K562 (cell line): ENCODE measurements at regions of chr15 and their contacts with region 1.

Region 1: DNA sequence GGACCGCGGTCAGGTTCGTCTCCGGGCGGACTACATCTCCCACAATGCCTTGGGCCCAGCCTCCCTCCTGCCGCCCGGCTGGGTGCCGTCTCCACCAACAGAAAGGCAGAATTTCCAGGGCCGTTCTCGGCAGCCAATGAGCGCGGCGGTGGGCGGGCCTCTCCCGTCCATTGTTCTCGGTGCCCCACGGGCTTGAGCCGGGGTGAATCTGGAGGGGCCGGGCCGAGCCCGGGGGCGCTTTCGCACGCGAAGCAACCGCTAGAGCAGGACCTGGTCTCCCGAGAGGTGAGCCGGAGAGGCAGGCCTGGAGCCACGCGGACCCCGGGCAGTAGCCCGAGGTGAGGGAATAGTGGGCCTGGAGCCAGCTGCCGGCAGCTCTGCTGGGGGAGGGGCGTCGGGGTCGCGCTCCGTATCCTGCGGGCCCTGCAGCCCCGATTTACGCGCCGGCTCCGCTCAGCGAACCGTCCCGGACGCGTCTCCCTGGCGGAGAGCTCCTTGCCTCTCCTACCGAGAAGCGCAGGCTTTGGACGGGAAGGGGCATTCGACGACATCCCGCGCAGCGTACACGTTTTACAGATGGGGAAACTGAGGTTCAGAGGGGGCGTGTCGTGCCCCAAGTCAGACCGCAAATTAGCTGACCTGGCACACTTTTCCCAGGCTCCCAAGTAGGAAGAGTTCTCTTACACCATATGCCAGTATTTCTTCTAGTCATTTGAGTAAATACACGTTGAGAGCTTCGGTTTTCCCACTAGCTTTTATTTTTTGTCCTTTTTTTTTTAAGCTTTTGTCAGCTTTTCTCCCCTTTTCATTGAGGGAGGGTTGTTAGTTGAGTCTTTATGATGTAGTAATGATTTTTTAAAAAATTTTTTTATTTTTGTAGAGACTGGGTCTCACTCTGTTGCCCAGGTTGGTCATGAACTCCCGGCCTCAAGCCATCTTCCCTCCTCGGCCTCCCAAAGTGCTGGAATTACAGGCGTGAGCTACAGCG is at the start of gene ZSCAN2:
- DNase-seq: peak; percentile 96
- ATAC-seq: peak; percentile 99
- H3K4me3 ChIP-seq: peak within 1 kb of the TSS; percentile 60
- H3K27ac ChIP-seq: peak within 1 kb of the TSS; percentile 14; the same call in 2 of the 3 replicates
- H3K4me1 ChIP-seq: peaks cover 10 to 21% of the 10 kb centered on the region in 2 experiments
- H3K27me3 ChIP-seq: no peaks in the 10 kb centered on the region
- CTCF ChIP-seq: no peak; a peak in 1 of 6 replicates
- EP300 ChIP-seq: no peak
- POLR2A ChIP-seq: peak; percentile 71
- RAD21 ChIP-seq: no peak
- polyA plus RNA-seq, gene ZSCAN2: 1.7 to 2.3 TPM

Region 2: GRCh38 chr15:84552896-84553295 is 48.2 kb before region 1 on chr15:
- CTCF ChIA-PET with region 1: no interaction called
- POLR2A ChIA-PET with region 1: no interaction called
- in situ Hi-C with region 1: no loop called
- intact Hi-C with region 1: no loop called
- DNase-seq: no peak
- ATAC-seq: no peak
- H3K4me3 ChIP-seq: no peak overlapping the region
- H3K27ac ChIP-seq: no peak overlapping the region
- H3K4me1 ChIP-seq: peaks cover 0 to 4% of the 10 kb centered on the region in 2 experiments; a peak in 3 of 5 replicates
- H3K27me3 ChIP-seq: no peaks in the 10 kb centered on the region
- CTCF ChIP-seq: no peak
- EP300 ChIP-seq: no peak
- POLR2A ChIP-seq: no peak
- RAD21 ChIP-seq: no peak

Region 3: GRCh38 chr15:84631706-84632272 is 30.6 kb after region 1 on chr15:
- CTCF ChIA-PET with region 1: interaction called, 18 read pairs
- POLR2A ChIA-PET with region 1: interaction called, 3 read pairs
- in situ Hi-C with region 1: no loop called
- intact Hi-C with region 1: loop called (anchors 2 kb)
- DNase-seq: peak in 2 of 4 experiments; percentile 33 to 41
- ATAC-seq: peak; percentile 5
- H3K4me3 ChIP-seq: peak overlapping the region; percentile 54
- H3K27ac ChIP-seq: peak overlapping the region; percentile 83
- H3K4me1 ChIP-seq: peaks cover 18 to 20% of the 10 kb centered on the region in 2 experiments; a peak in 4 of 5 replicates
- H3K27me3 ChIP-seq: no peaks in the 10 kb centered on the region
- CTCF ChIP-seq: no peak
- EP300 ChIP-seq: no peak
- POLR2A ChIP-seq: no peak
- RAD21 ChIP-seq: no peak

Region 4: GRCh38 chr15:84638103-84638502 is 37.0 kb after region 1 on chr15:
- CTCF ChIA-PET with region 1: interaction called, 18 read pairs
- POLR2A ChIA-PET with region 1: interaction called, 3 read pairs
- in situ Hi-C with region 1: no loop called
- intact Hi-C with region 1: loop called (anchors 1 kb)
- DNase-seq: peak; percentile 38 to 61 (median 50)
- ATAC-seq: peak; percentile 48
- H3K4me3 ChIP-seq: no peak overlapping the region
- H3K27ac ChIP-seq: no peak overlapping the region
- H3K4me1 ChIP-seq: peaks cover 11 to 12% of the 10 kb centered on the region in 2 experiments; a peak in 4 of 5 replicates
- H3K27me3 ChIP-seq: no peaks in the 10 kb centered on the region
- CTCF ChIP-seq: peak; percentile 44 to 65 (median 50); a peak in 5 of 6 replicates
- EP300 ChIP-seq: no peak
- POLR2A ChIP-seq: no peak
- RAD21 ChIP-seq: peak; percentile 11 to 62; a peak in 2 of 4 replicates

Region 5: DNA sequence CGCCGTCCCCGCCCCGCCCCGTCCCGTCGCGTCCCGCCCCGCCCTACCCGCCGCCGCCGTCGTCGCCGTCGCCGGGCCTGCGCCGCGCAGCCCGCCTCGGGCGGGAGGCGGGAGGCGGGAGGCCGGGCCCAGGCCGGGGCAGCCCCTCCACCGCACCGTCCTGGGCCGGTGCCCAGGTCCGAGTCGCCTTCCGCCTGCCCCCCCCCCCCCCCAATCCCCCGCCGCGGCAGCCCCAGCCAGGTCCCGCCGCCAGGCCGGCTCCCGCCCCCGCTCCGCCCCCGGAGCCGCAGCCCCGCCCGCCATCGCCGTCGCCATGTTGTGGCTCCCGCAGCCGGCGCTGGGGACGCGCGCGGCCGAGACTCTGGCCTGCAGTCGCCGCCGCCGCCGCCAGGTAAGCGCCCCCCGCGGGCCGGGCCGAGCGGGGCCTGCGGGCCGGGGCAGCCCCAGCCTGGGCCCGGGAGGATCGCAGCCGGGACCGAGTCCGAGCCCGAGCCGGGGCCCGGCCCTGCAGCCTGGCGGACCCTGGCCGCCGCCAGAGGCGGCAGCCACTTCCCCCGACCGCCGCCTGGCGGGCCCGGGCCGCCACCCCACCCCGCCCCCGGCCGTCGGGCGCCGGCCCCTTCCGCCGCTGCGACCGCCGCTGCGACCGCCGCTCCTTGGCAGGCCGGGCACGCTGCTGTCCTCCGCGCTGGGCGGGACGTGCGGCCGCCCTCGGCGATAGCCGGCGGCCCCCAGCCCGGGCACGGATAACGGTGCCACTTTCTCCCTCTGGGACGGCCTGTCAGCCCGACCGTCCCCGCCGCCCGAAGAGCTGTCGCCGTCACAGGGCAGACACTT is 147.3 kb after region 1 on chr15 and contains the start of gene ZNF592:
- CTCF ChIA-PET with region 1: no interaction called
- POLR2A ChIA-PET with region 1: no interaction called
- in situ Hi-C with region 1: no loop called
- intact Hi-C with region 1: loop called (anchors 5 kb)
- DNase-seq: peak; percentile 82 to 92 (median 86)
- ATAC-seq: peak; percentile 66
- H3K4me3 ChIP-seq: peak within 1 kb of the TSS; percentile 91
- H3K27ac ChIP-seq: peak within 1 kb of the TSS; percentile 90
- H3K4me1 ChIP-seq: peaks cover 22 to 29% of the 10 kb centered on the region in 2 experiments; a peak in 4 of 5 replicates
- H3K27me3 ChIP-seq: no peaks in the 10 kb centered on the region
- CTCF ChIP-seq: peak in 2 of 3 experiments; percentile 42 to 76; a peak in 3 of 6 replicates
- EP300 ChIP-seq: no peak
- POLR2A ChIP-seq: no peak
- RAD21 ChIP-seq: peak in 1 of 2 experiments; percentile 34; a peak in 2 of 4 replicates
- polyA plus RNA-seq, gene ZNF592: 0.88 to 1.7 TPM

Region 6: DNA sequence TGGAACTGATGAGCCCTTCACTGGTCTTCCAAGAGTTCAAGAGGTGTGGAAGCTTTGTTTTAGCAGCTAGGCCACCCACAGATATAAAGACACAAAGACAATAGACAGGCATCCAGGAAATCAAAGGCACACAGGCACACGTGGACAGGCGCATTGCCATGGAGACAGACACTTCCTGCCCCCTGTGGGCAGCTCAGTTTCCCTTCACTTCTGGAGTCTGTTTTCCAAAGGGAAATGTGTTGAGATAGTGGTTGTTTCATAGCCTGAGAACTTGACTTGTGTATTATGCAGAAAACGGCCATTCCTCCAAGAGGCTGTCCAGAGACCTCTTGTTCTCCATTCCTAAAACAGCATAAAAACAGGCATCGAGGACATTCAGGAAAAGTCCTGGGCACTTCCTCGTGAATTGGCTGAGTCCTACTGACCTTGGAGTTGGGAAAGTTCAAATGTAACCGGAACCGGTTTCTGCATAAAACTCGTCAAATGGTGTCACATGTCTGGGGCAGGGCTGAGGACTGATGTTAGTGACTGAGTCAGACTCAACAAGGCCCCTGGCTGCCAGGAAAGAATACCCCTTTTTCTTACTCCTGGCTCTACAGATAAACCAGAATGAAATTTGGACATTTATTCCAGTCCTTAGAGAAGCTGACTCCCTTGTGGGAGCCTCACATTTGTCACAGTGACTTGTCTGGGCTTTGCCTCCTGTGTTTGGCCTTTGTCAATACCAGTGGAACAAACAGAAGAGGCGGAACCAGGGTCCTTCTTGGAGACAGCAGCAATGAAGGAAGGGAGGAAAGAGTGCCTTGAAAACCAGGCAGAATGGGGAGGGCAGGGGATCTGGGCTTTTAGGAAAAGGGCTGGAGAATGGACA is 217.4 kb after region 1 on chr15:
- CTCF ChIA-PET with region 1: interaction called, 4 read pairs
- POLR2A ChIA-PET with region 1: interaction called, 3 read pairs
- in situ Hi-C with region 1: no loop called
- intact Hi-C with region 1: loop called (anchors 1 kb)
- DNase-seq: peak in 2 of 4 experiments; percentile 33 to 46
- ATAC-seq: no peak
- H3K4me3 ChIP-seq: no peak overlapping the region
- H3K27ac ChIP-seq: peak overlapping the region; percentile 37; the same call in 2 of the 3 replicates
- H3K4me1 ChIP-seq: peaks cover 24 to 33% of the 10 kb centered on the region in 2 experiments
- H3K27me3 ChIP-seq: no peaks in the 10 kb centered on the region
- CTCF ChIP-seq: peak in 1 of 3 experiments; percentile 12; a peak in 1 of 6 replicates
- EP300 ChIP-seq: no peak
- POLR2A ChIP-seq: no peak
- RAD21 ChIP-seq: no peak

Region 7: DNA sequence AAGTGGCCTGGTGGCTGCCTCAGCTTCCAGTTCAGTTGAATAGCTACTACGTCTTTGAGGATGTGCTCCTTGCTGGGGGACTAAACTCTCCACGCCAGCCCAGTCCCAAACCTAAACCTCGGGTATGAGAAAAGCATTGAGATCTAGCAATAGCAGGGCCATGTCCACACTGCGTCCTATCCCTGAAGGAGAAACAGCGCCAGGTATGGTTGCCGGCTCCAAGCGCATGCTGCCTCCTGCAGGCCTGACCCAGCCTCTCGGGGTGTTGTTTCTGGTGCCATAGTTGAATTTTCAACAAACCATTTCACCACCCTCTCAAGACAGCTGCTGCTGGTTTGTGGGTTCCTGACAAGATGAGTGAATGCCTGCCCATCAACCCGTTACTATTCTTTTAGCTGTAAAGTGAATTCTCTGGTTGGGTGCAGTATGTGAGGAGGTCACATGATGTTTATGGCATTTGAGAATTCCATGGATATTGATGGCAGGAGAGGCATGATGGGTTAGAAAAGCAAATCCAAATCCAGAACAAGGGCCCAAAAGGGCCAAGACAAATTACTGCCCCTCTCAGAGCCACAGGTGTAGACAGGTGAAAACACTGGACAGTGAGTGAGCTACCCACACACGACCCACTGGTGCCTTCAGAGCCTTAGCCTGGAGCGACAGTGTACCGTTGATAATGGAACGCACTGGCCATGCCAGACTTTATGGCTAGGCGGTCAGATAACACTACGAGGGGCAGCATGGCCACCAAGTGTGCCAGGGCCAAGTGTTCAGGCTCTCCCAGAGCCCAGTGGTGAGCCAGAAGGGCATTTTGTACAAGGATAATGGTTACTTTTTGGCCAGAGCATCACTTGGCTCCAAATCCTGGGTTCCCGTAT is 270.5 kb after region 1 on chr15:
- CTCF ChIA-PET with region 1: no interaction called
- POLR2A ChIA-PET with region 1: no interaction called
- in situ Hi-C with region 1: loop called (anchors 25 kb)
- intact Hi-C with region 1: loop called (anchors 1 kb)
- DNase-seq: peak in 3 of 4 experiments; percentile 35 to 48 (median 43)
- ATAC-seq: peak; percentile 80
- H3K4me3 ChIP-seq: no peak overlapping the region
- H3K27ac ChIP-seq: no peak overlapping the region
- H3K4me1 ChIP-seq: no peaks in the 10 kb centered on the region; a peak in 1 of 5 replicates
- H3K27me3 ChIP-seq: peaks cover 20 to 52% of the 10 kb centered on the region in 2 experiments
- CTCF ChIP-seq: peak; percentile 67 to 70 (median 70)
- EP300 ChIP-seq: no peak
- POLR2A ChIP-seq: no peak
- RAD21 ChIP-seq: peak; percentile 34 to 65

Region 8: GRCh38 chr15:84929744-84930371 is 328.7 kb after region 1 on chr15:
- CTCF ChIA-PET with region 1: no interaction called
- POLR2A ChIA-PET with region 1: no interaction called
- in situ Hi-C with region 1: no loop called
- intact Hi-C with region 1: loop called (anchors 5 kb)
- DNase-seq: peak; percentile 67 to 86 (median 71)
- ATAC-seq: peak; percentile 82
- H3K4me3 ChIP-seq: no peak overlapping the region
- H3K27ac ChIP-seq: peak overlapping the region; percentile 62
- H3K4me1 ChIP-seq: peaks cover 16 to 22% of the 10 kb centered on the region in 2 experiments
- H3K27me3 ChIP-seq: no peaks in the 10 kb centered on the region
- CTCF ChIP-seq: no peak
- EP300 ChIP-seq: peak; percentile 66
- POLR2A ChIP-seq: no peak
- RAD21 ChIP-seq: no peak